Activated T-helper 1 cell treated with anti-CD3 and anti-CD28 coated beads, Interleukin-12 subunit alpha, Interleukin-12 subunit beta, Interleukin-2, Interleukin-4 antibody, amounts not matched to agents 30 ng/mL and 10 ng/mL and 1 ng/mL, durations not matched to agents 14 hours and 24 hours and 36 hours (primary cell): ENCODE measurements at regions of chr21 and their contacts with region 1.

Region 1: DNA sequence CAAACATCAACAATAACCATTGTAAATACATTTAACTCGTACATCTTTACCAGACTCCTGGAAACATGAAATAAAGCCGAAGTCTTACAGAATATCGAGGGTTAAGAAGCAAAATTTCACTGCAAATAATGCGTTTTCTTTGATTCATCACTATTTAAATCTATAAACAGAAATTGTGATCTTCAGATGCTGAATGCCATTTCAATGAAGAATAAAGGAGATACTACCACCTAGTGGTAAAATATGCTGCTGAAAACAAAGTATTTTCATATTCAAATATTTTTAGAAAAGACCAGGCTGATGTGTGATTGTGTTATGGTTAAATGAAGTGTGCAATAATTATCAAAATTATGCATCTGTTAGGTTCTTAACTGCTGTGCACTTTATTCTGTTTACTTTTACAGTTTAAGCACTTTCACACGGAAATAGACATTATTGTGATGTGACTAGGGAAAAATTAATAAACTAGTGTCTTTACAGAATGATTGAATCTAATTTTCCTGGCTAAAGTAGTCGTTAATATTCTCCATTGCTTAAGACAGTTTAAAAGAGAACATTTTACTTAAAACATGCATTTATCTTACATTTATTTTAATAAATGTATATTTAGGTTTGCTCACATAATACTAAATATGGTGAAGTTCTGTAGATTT is 1093.1 kb downstream of the MRPL39 start:
- DNase-seq: no peak
- H3K4me3 Mint-ChIP-seq: no peak overlapping the region
- H3K27ac Mint-ChIP-seq: no peak overlapping the region
- H3K4me1 Mint-ChIP-seq: no peaks in the 10 kb centered on the region
- H3K27me3 Mint-ChIP-seq: no peaks in the 10 kb centered on the region

Region 2: GRCh38 chr21:23574932-23575331 is 939.3 kb before region 1 on chr21:
- intact Hi-C with region 1: no loop called
- DNase-seq: no peak
- H3K4me3 Mint-ChIP-seq: no peak overlapping the region
- H3K27ac Mint-ChIP-seq: no peak overlapping the region
- H3K4me1 Mint-ChIP-seq: no peaks in the 10 kb centered on the region
- H3K27me3 Mint-ChIP-seq: no peaks in the 10 kb centered on the region

Region 3: DNA sequence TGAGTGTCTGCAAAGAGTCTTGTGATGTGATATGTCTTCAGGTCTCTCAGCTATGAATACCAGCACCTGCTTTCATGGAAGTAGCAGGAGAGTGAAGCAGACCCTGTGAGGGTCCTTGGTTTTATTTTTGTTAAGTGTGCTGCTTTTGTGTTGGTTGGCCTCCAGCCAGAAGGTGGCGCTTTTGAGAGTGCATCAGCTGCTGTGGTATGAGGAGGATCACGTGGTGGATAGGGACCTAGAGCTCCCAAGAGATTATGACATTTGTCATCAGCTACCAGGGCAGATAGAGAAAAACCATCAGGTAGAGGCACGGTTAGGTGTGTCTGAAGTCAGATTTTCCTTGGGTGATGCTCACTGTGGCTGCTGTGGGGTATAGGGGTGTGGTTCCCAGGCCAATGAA is 139.0 kb before region 1 on chr21:
- intact Hi-C with region 1: loop called (anchors 1 kb)
- DNase-seq: no peak
- H3K4me3 Mint-ChIP-seq: no peak overlapping the region
- H3K27ac Mint-ChIP-seq: no peak overlapping the region
- H3K4me1 Mint-ChIP-seq: no peaks in the 10 kb centered on the region
- H3K27me3 Mint-ChIP-seq: no peaks in the 10 kb centered on the region

Region 4: GRCh38 chr21:24403221-24403620 is 111.0 kb before region 1 on chr21:
- intact Hi-C with region 1: no loop called
- DNase-seq: no peak
- H3K4me3 Mint-ChIP-seq: no peak overlapping the region
- H3K27ac Mint-ChIP-seq: no peak overlapping the region
- H3K4me1 Mint-ChIP-seq: no peaks in the 10 kb centered on the region
- H3K27me3 Mint-ChIP-seq: peaks cover 1% of the 10 kb centered on the region

Region 5: GRCh38 chr21:24418671-24419070 is 95.5 kb before region 1 on chr21:
- intact Hi-C with region 1: loop called (anchors 10 kb)
- DNase-seq: no peak
- H3K4me3 Mint-ChIP-seq: no peak overlapping the region
- H3K27ac Mint-ChIP-seq: no peak overlapping the region
- H3K4me1 Mint-ChIP-seq: no peaks in the 10 kb centered on the region
- H3K27me3 Mint-ChIP-seq: peaks cover 5% of the 10 kb centered on the region